PC-9 (cell line): ENCODE measurements at regions of chr2 and their contacts with region 1.

Region 1: GRCh38 chr2:61529944-61530735 is 8.0 kb downstream of the XPO1 start:
- DNase-seq: no peak
- H3K4me3 ChIP-seq: no peak overlapping the region
- H3K27ac ChIP-seq: no peak overlapping the region
- H3K4me1 ChIP-seq: peaks cover 27% of the 10 kb centered on the region
- H3K27me3 ChIP-seq: no peaks in the 10 kb centered on the region
- CTCF ChIP-seq: no peak

Region 2: DNA sequence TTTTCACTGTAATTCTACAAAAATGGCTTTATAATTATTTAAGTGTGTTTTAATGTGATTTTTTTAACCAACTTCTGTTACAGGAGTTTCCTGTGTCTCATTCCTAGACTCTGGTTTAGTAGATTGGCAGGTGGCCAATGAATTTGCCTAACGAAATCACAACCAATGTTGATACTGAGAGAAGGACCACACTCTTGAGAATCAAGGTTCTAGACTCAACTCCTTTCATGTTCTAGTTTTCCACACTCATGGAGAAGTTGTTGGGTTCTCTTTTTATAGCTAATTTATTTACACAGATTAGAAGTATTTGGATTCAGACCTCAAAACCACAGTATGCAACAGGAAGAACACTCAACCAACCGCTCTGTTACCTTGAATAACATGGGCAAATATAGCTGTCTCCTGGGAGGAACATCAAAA is 36.6 kb before region 1 on chr2:
- CTCF ChIA-PET with region 1: no interaction called
- POLR2A ChIA-PET with region 1: no interaction called
- intact Hi-C with region 1: loop called (anchors 1 kb)
- DNase-seq: no peak
- H3K4me3 ChIP-seq: no peak overlapping the region
- H3K27ac ChIP-seq: peak overlapping the region; percentile 3; the same call in 1 of the 2 replicates
- H3K4me1 ChIP-seq: no peaks in the 10 kb centered on the region
- H3K27me3 ChIP-seq: no peaks in the 10 kb centered on the region
- CTCF ChIP-seq: no peak

Region 3: GRCh38 chr2:61512768-61513398 is 17.3 kb before region 1 on chr2:
- CTCF ChIA-PET with region 1: no interaction called
- POLR2A ChIA-PET with region 1: no interaction called
- intact Hi-C with region 1: loop called (anchors 1 kb)
- DNase-seq: no peak
- H3K4me3 ChIP-seq: no peak overlapping the region
- H3K27ac ChIP-seq: 0 out of 2 replicates have a peak overlapping the region, but pooled peaks have one; percentile 0
- H3K4me1 ChIP-seq: no peaks in the 10 kb centered on the region
- H3K27me3 ChIP-seq: no peaks in the 10 kb centered on the region
- CTCF ChIP-seq: no peak